PC-9 (cell line): ENCODE measurements at regions of chr9 and their contacts with region 1.

Region 1: GRCh38 chr9:92790542-92791527 is 26.2 kb upstream of the BICD2 start:
- DNase-seq: peak; percentile 65 to 84
- H3K4me3 ChIP-seq: no peak overlapping the region
- H3K27ac ChIP-seq: no peak overlapping the region
- H3K4me1 ChIP-seq: no peaks in the 10 kb centered on the region
- H3K27me3 ChIP-seq: no peaks in the 10 kb centered on the region
- CTCF ChIP-seq: peak; percentile 91

Region 2: DNA sequence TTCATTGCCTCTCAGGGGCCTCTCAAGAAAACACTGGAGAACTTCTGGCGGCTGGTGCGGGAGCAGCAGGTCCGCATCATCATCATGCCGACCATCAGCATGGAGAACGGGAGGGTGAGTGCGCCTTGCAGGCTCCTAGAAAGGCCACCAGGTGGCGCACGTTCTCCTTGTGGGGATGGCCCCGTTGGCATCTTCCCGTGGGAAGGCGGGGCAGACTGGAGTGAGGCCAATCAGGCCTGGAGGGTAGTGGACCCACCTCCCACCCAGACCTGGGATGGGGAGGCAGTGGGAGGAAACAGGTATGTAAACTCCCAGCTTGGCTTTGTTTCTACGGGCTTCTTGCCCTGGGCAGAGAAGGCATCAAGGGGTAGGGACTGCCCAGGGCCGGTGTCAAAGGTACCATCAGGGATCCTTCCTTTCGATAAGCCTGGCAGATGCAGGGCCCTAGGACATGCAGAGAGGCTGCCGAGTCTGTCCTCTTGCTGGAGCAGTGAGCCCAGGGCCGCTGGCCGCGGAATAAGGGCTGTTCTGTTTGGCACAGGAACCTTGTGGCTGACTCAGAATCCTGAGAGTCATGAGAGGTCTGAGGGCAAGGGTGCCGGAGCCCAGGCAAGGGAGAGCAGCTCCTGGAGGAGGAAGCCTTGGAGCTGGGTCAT is 656.8 kb before region 1 on chr9:
- CTCF ChIA-PET with region 1: no interaction called
- POLR2A ChIA-PET with region 1: no interaction called
- intact Hi-C with region 1: loop called (anchors 1 kb)
- DNase-seq: peak; percentile 66 to 82
- H3K4me3 ChIP-seq: no peak overlapping the region
- H3K27ac ChIP-seq: no peak overlapping the region
- H3K4me1 ChIP-seq: no peaks in the 10 kb centered on the region
- H3K27me3 ChIP-seq: 0 out of 2 replicates have a peak, but pooled peaks cover 10% of the 10 kb centered on the region
- CTCF ChIP-seq: peak; percentile 95

Region 3: GRCh38 chr9:92716557-92716956 is 74.3 kb before region 1 on chr9:
- CTCF ChIA-PET with region 1: interaction called, 6 read pairs
- POLR2A ChIA-PET with region 1: no interaction called
- intact Hi-C with region 1: loop called (anchors 1 kb)
- DNase-seq: peak in 1 of 2 experiments; percentile 77
- H3K4me3 ChIP-seq: no peak overlapping the region
- H3K27ac ChIP-seq: no peak overlapping the region
- H3K4me1 ChIP-seq: no peaks in the 10 kb centered on the region
- H3K27me3 ChIP-seq: no peaks in the 10 kb centered on the region
- CTCF ChIP-seq: peak; percentile 95

Region 4: GRCh38 chr9:92728831-92729734 is 61.8 kb before region 1 on chr9:
- CTCF ChIA-PET with region 1: interaction called, 15 read pairs
- POLR2A ChIA-PET with region 1: no interaction called
- intact Hi-C with region 1: no loop called
- DNase-seq: no peak
- H3K4me3 ChIP-seq: no peak overlapping the region
- H3K27ac ChIP-seq: no peak overlapping the region
- H3K4me1 ChIP-seq: no peaks in the 10 kb centered on the region
- H3K27me3 ChIP-seq: no peaks in the 10 kb centered on the region
- CTCF ChIP-seq: no peak

Region 5: DNA sequence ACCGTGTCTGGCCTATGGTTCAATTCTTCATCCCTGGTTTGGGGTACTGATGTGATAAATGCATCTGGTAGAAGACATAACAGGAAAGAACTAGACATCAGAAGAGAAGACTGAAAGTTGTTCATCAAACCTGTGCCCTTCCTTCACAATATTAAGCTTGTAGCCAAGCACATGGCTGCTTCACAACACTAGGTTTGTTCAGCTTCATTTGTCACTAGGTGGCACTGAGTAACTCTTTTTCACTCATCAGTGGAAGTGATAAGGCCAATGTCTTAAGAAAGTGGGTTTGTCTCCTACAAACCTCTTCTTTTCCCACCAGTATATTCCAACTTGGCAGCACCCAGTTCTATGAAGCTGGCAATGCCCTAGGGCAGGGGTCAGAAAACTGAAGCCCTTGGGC is 60.0 kb after region 1 on chr9:
- CTCF ChIA-PET with region 1: no interaction called
- POLR2A ChIA-PET with region 1: no interaction called
- intact Hi-C with region 1: no loop called
- DNase-seq: no peak
- H3K4me3 ChIP-seq: no peak overlapping the region
- H3K27ac ChIP-seq: no peak overlapping the region
- H3K4me1 ChIP-seq: no peaks in the 10 kb centered on the region
- H3K27me3 ChIP-seq: no peaks in the 10 kb centered on the region
- CTCF ChIP-seq: no peak